Transverse colon (tissue), 4 donors: ENCODE measurements at regions of chr2 and their contacts with region 1.

Region 1: GRCh38 chr2:113370478-113371091 is 66.9 kb upstream of the ZNG1B start:
- DNase-seq: peak; percentile 75
- H3K4me3 ChIP-seq: no peak overlapping the region
- H3K27ac ChIP-seq: no peak overlapping the region
- H3K4me1 ChIP-seq: peaks cover 0 to 5% (median 2%) of the 10 kb centered on the region in 4 donors
- H3K27me3 ChIP-seq: no peaks in the 10 kb centered on the region
- CTCF ChIP-seq: peak; percentile 61 to 88 (median 68)
- EP300 ChIP-seq: no peak
- POLR2A ChIP-seq: no peak

Region 2: GRCh38 chr2:113138428-113139322 is 231.9 kb before region 1 on chr2:
- in situ Hi-C with region 1: loop called in 2 of 4 experiments (anchors 25 kb)
- intact Hi-C with region 1: no loop called
- DNase-seq: no peak
- H3K4me3 ChIP-seq: peak overlapping the region in 1 of 4 donors; percentile 26
- H3K27ac ChIP-seq: peak overlapping the region in 1 of 4 donors; percentile 31
- H3K4me1 ChIP-seq: peaks cover 0 to 7% (median 3%) of the 10 kb centered on the region in 4 donors
- H3K27me3 ChIP-seq: no peaks in the 10 kb centered on the region
- CTCF ChIP-seq: peak; percentile 76 to 86 (median 84)
- EP300 ChIP-seq: no peak
- POLR2A ChIP-seq: no peak

Region 3: GRCh38 chr2:113248997-113249770 is 121.4 kb before region 1 on chr2:
- in situ Hi-C with region 1: loop called in 3 of 4 experiments (anchors 5 to 25 kb)
- intact Hi-C with region 1: loop called (anchors 5 kb)
- DNase-seq: peak; percentile 83
- H3K4me3 ChIP-seq: no peak overlapping the region
- H3K27ac ChIP-seq: no peak overlapping the region
- H3K4me1 ChIP-seq: peaks cover 0 to 4% (median 2%) of the 10 kb centered on the region in 4 donors
- H3K27me3 ChIP-seq: no peaks in the 10 kb centered on the region
- CTCF ChIP-seq: peak; percentile 90 to 95 (median 91)
- EP300 ChIP-seq: no peak
- POLR2A ChIP-seq: no peak

Region 4: DNA sequence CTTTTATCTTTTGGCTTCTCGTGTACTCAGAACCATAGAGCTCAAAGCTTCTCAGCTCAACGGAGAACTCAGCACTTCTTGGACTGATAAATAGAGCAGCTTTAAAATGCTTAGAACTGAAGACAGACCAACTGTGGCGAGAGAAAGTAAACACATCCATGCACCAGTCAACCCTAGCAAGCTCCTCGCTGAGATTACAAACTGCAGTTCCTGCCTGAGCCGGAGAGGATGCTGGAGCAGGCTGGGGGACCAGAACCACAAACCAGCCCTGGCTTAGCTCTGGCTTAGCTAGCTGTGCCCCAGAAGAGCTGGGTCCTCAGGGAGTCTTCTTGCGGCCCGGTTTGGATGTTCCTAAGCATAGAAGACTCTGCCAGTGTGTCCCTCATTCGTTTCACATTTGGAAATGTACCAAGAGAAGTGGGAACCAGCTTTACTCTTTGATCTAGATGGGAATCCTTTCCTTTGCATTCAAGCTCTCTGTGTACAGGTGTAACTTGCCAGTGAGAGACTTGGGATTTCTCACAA is 97.5 kb before region 1 on chr2:
- in situ Hi-C with region 1: loop called in 2 of 4 experiments (anchors 10 to 25 kb)
- intact Hi-C with region 1: no loop called
- DNase-seq: no peak
- H3K4me3 ChIP-seq: no peak overlapping the region
- H3K27ac ChIP-seq: no peak overlapping the region
- H3K4me1 ChIP-seq: peaks cover 0 to 9% (median 2%) of the 10 kb centered on the region in 4 donors
- H3K27me3 ChIP-seq: peaks cover 77% of the 10 kb centered on the region
- CTCF ChIP-seq: no peak
- EP300 ChIP-seq: no peak
- POLR2A ChIP-seq: no peak